Body of pancreas (tissue), 4 donors: ENCODE measurements at regions of chr10 and their contacts with region 1.

Region 1: DNA sequence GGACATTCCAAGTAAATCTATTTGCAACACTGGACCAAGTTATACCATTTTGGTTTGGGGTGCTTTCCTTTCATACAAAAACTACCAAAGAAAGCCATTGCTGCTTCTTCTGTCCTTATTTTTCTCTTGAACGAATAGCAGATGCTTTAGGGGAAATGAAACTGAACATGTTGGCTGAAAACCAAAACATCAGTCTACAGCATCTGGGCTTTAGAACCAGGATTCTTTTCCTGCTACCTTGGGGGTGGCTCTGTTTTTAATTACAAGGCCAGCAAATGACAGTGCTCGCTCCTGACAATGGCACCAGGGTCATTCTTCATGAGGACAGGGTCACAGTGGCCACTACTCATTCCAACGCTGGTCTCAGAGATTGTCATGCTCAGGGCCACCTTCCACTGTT is 80.3 kb downstream of the WDR11 start:
- DNase-seq: no peak
- ATAC-seq: no peak
- H3K4me3 ChIP-seq: no peak overlapping the region
- H3K27ac ChIP-seq: no peak overlapping the region
- H3K4me1 ChIP-seq: no peaks in the 10 kb centered on the region
- H3K27me3 ChIP-seq: no peaks in the 10 kb centered on the region
- CTCF ChIP-seq: no peak
- POLR2A ChIP-seq: no peak

Region 2: GRCh38 chr10:121899727-121900126 is 968.3 kb after region 1 on chr10:
- intact Hi-C with region 1: loop called (anchors 10 kb)
- DNase-seq: peak; percentile 28 to 66 (median 60)
- ATAC-seq: peak; percentile 79
- H3K4me3 ChIP-seq: no peak overlapping the region
- H3K27ac ChIP-seq: peak overlapping the region in 3 of 4 donors; percentile 20 to 60 (median 52)
- H3K4me1 ChIP-seq: peaks cover 12% of the 10 kb centered on the region
- H3K27me3 ChIP-seq: no peaks in the 10 kb centered on the region
- CTCF ChIP-seq: no peak
- POLR2A ChIP-seq: no peak